Heart right ventricle (tissue), 16 donors: ENCODE measurements at regions of chr2 and their contacts with region 1.

Region 1: GRCh38 chr2:30691948-30692828 is 115.1 kb downstream of the CAPN13 start:
- DNase-seq: no peak
- ATAC-seq: peak; percentile 35 to 76 (median 63)
- H3K4me3 ChIP-seq: no peak overlapping the region
- H3K27ac ChIP-seq: peak overlapping the region in 6 of 10 donors; percentile 16 to 76 (median 53)
- H3K4me1 ChIP-seq: peaks cover 5 to 48% (median 27%) of the 10 kb centered on the region in 9 donors
- H3K27me3 ChIP-seq: no peaks in the 10 kb centered on the region
- CTCF ChIP-seq: peak in 8 of 9 donors; percentile 19 to 63 (median 38)

Region 2: DNA sequence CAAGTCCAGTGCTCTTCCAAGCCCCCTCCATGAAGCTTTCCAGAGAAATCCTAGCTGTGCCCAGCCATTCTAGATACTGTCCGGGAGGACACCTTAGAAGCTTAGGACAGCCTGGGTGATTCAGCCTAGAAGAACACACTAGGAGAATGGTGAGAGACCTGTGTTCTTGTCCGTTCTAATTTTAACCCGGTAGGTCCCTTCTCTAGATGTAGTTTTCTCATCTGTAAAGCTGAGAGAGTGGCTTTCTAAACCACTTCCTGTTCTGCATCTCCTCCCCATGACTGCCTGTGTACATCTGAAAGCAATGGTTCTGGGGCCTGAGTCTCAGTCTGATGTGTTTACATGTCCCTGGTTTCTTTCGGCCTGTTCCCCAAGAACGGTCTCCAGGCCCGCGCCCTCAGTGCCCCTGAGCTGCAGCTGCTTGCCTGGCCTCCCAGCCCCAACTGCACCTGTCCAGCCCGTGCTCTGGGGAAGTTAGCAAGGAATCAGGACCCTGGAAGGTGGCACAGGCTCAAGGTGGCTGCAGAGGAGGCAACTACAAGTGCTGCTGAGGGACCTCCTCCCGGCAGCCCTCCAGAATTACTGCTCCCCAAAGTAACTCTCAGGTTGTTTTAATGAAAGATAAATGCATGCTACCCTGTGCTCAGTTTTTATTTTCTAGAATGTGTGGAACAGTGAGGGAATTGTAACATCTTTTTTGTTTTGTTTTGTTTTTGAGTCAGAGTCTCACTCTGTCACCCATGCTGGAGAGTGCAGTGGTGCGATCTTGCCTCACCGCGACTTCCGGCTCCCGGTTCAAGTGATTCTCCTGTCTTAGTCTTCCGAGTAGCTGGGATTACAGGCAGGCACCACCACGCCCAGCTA is 355.0 kb before region 1 on chr2:
- intact Hi-C with region 1: loop called in 2 of 10 experiments (anchors 2 to 10 kb)
- DNase-seq: no peak
- ATAC-seq: no peak
- H3K4me3 ChIP-seq: no peak overlapping the region
- H3K27ac ChIP-seq: peak overlapping the region in 2 of 10 donors; percentile 21 to 73
- H3K4me1 ChIP-seq: peaks cover 7 to 50% (median 39%) of the 10 kb centered on the region in 9 donors
- H3K27me3 ChIP-seq: no peaks in the 10 kb centered on the region
- CTCF ChIP-seq: no peak

Region 3: DNA sequence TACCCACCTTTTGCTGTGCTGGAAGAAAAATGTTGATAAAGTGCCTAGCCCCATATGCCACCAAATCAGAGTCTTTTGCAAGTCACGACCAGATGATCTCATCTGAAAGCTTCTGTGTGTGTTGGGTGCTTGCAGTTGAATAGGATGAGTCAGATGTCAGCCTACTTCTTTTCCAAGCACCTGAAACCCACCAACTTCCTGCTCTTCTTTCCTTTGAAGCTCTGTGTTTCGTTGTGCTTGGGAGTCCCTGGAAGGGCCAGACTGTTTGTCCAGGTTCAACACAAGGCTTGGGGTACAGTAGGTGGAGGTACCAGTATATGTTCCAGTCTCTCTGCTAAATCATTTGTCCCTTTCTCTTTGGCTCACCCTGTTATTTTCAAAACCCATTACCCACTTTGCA is 282.0 kb before region 1 on chr2:
- intact Hi-C with region 1: loop called in 3 of 10 experiments (anchors 5 to 10 kb)
- DNase-seq: no peak
- ATAC-seq: no peak
- H3K4me3 ChIP-seq: no peak overlapping the region
- H3K27ac ChIP-seq: peak overlapping the region in 9 of 10 donors; percentile 69 to 92 (median 86)
- H3K4me1 ChIP-seq: peaks cover 30 to 85% (median 67%) of the 10 kb centered on the region in 9 donors
- H3K27me3 ChIP-seq: no peaks in the 10 kb centered on the region
- CTCF ChIP-seq: no peak

Region 4: DNA sequence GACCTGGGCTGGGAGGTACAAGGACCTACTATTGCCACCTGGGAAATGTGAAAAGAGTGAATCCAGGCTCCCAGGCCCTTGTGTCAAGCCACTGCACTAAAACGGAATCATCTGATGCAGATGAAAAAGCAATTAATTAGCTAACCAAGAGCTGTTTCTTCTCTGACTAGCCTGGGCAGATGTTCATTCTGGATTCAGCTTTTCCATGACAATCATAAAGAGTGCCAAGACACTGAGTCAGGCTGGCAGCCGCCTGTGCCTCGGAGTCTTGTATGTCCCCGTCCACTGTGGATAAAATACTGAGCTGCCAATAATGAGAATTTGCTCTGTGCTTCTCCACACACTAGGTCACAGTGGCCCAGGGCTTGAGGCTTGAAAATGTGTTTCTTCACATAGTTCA is 266.9 kb before region 1 on chr2:
- intact Hi-C with region 1: no loop called
- DNase-seq: no peak
- ATAC-seq: peak in 2 of 8 donors; percentile 25 to 38
- H3K4me3 ChIP-seq: no peak overlapping the region
- H3K27ac ChIP-seq: peak overlapping the region in 1 of 10 donors; percentile 33
- H3K4me1 ChIP-seq: peaks cover 2 to 31% (median 25%) of the 10 kb centered on the region in 9 donors
- H3K27me3 ChIP-seq: no peaks in the 10 kb centered on the region
- CTCF ChIP-seq: no peak

Region 5: DNA sequence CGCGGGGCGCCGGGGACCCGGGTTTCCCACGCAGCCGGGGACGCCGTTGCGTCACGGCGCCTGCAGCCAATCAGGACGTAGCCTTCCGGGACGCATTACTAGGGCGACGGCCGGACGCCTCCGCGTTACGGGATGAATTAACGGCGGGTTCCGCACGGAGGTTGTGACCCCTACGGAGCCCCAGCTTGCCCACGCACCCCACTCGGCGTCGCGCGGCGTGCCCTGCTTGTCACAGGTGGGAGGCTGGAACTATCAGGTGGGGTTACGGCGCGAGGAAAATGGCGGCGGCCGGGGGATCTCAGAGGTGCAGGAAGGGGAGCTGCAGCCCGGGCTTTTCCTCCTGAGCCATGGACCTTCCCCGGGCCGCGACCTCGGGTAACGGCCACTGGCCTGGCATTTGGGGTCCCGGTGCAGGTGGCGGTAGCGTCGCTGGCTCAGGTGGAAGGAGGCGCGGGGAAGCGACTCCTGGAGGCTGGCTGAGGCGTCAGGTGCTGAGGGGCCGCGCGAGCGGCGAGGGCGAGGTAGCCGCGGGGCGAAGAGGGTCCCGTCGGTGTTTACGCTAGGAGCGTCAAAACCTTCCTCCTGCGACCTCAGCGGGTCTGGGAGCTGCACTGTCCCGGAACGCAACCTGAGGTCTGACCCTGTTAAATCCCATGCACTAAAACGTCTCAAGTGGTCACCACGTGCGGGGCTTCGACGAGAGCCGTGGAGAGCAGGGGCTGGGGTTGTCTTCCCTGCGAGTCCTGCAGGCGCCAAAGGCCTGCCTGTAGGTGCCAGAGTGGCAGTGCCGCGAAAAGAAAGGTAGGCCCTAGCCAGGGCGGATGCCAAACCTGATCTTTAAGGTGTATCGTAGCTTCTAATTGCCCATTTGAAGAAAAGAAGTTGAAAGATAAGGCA is 244.8 kb before region 1 on chr2 and contains the start of gene LCLAT1:
- intact Hi-C with region 1: loop called in 1 of 10 experiments (anchors 10 kb)
- DNase-seq: peak; percentile 87
- ATAC-seq: peak; percentile 95 to 99 (median 98)
- H3K4me3 ChIP-seq: peak within 1 kb of the TSS; percentile 79 to 99 (median 90)
- H3K27ac ChIP-seq: peak within 1 kb of the TSS; percentile 44 to 92 (median 87)
- H3K4me1 ChIP-seq: peaks cover 4 to 32% (median 21%) of the 10 kb centered on the region in 9 donors
- H3K27me3 ChIP-seq: no peaks in the 10 kb centered on the region
- CTCF ChIP-seq: peak in 3 of 9 donors; percentile 13 to 33 (median 22)
- total RNA-seq, gene LCLAT1: 26.6 to 56.4 (median 44.9) TPM